ENCODE measurements at regions of chr12 and their contacts with region 1.

Region 1: DNA sequence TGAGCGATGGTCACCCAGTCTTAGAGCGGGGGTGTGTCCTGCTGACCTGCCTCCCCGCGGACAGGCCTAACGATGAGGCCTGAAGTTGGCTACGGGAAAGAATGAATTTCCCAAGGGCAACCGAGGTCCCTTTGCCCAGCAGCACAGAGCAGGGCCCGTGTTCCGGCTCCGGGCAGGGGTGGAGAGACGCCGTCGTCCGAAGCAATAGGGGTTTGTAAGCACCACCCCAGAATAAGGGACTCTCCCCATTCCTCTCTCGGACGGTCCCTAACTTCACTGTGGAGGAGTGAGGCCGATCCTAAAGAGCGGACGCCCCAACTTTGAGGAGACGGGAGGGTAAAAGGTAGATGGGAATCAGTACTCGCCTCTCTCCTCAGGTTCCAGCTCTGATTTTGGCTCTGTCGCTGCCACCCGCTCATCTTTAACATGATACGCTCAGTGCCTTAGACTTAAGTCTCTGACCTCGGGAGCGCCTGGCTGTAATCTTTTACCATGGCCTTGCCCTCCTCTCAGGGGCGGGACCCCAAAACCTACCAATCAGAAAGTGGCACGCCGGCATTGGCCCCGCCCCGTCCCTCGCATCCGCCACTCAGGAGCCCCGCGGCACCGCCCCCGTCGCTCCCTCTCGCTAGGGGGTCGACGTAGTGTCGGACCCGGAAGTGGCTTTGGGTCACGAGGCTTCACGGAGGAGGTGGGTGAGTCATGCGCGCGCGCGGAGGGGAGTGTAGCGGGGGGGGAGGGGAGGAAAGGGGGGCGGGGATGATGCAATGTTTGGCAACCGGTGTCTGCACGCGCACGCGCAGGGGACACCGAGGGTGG is at the start of gene DDIT3:
- DNase-seq: peak; percentile 98 to 100 (median 100)
- ATAC-seq: peak; percentile 70 to 79
- H3K4me3 Mint-ChIP-seq: peak within 1 kb of the TSS; percentile 95 to 99 (median 98)
- H3K27ac Mint-ChIP-seq: peak within 1 kb of the TSS; percentile 99 to 100 (median 100)
- H3K4me1 Mint-ChIP-seq: peaks cover 40 to 67% (median 63%) of the 10 kb centered on the region in 4 donors
- H3K27me3 Mint-ChIP-seq: peaks cover 0 to 2% (median 0%) of the 10 kb centered on the region in 5 donors
- polyA plus RNA-seq, gene DDIT3: 13.1 to 18.7 (median 15.5) TPM

Region 2: GRCh38 chr12:57332646-57333312 is 187.5 kb before region 1 on chr12:
- POLR2A ChIA-PET with region 1: interaction called, 11 read pairs
- DNase-seq: no peak
- ATAC-seq: no peak
- H3K4me3 Mint-ChIP-seq: no peak overlapping the region
- H3K27ac Mint-ChIP-seq: peak overlapping the region in 2 of 10 donors; percentile 5 to 31
- H3K4me1 Mint-ChIP-seq: peaks cover 0 to 8% (median 4%) of the 10 kb centered on the region in 4 donors
- H3K27me3 Mint-ChIP-seq: no peaks in the 10 kb centered on the region

Region 3: DNA sequence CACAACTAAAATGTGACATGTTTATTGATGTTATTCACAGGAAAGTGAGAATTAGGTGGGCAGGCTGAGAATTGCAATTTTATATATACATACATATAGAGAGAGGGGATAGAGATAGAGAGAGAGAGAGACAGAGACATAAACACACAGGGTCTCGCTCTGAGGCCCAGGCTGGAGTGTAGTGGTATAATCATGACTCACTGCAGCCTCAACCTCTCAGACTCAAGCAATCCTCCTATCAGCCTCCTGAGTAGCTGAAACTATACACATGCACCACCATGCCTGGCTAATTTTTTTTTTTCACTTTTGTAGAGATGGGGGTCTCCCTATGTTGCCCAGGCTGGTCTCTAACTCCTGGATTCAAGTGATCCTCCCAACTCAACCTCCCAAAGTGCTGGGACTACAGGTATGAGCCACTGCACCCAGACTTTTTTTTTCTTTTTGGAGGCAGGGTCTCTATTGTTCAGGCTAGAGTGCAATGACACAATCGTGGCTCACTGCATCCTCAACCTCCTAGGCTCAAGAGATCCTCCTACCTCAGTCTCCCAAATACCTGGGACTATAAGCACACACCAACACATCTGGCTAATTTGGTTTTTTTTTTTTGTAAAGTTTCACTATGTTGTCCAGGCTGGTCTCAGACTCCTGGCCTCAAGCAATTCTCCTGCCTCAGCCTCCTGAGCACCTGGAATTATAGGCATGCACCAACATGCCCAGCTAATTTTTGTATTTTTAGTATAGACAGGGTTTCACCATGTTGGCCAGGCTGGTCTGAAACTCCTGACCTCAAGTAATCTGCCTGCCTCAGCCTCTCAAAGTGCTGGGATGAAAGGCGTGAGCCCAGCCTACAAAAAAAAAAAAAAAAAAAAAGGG is 138.3 kb before region 1 on chr12:
- POLR2A ChIA-PET with region 1: no interaction called
- DNase-seq: no peak
- ATAC-seq: no peak
- H3K4me3 Mint-ChIP-seq: no peak overlapping the region
- H3K27ac Mint-ChIP-seq: peak overlapping the region in 5 of 10 donors; percentile 7 to 41 (median 36)
- H3K4me1 Mint-ChIP-seq: peaks cover 7 to 23% (median 14%) of the 10 kb centered on the region in 4 donors
- H3K27me3 Mint-ChIP-seq: no peaks in the 10 kb centered on the region

Region 4: GRCh38 chr12:57462251-57462911 is 57.9 kb before region 1 on chr12:
- POLR2A ChIA-PET with region 1: interaction called, 21 read pairs
- DNase-seq: peak; percentile 78 to 93 (median 88)
- ATAC-seq: peak; percentile 63 to 66
- H3K4me3 Mint-ChIP-seq: peak overlapping the region; percentile 80 to 96 (median 90)
- H3K27ac Mint-ChIP-seq: peak overlapping the region; percentile 52 to 93 (median 87)
- H3K4me1 Mint-ChIP-seq: peaks cover 31 to 58% (median 43%) of the 10 kb centered on the region in 4 donors
- H3K27me3 Mint-ChIP-seq: peaks cover 0 to 3% (median 0%) of the 10 kb centered on the region in 5 donors

Region 5: GRCh38 chr12:57476162-57476992 is 43.9 kb before region 1 on chr12:
- POLR2A ChIA-PET with region 1: interaction called, 135 read pairs
- DNase-seq: peak; percentile 59 to 90 (median 76)
- ATAC-seq: peak; percentile 13 to 41
- H3K4me3 Mint-ChIP-seq: peak overlapping the region; percentile 94 to 100 (median 98)
- H3K27ac Mint-ChIP-seq: peak overlapping the region; percentile 97 to 100 (median 100)
- H3K4me1 Mint-ChIP-seq: peaks cover 48 to 95% (median 88%) of the 10 kb centered on the region in 4 donors
- H3K27me3 Mint-ChIP-seq: no peaks in the 10 kb centered on the region

Region 6: DNA sequence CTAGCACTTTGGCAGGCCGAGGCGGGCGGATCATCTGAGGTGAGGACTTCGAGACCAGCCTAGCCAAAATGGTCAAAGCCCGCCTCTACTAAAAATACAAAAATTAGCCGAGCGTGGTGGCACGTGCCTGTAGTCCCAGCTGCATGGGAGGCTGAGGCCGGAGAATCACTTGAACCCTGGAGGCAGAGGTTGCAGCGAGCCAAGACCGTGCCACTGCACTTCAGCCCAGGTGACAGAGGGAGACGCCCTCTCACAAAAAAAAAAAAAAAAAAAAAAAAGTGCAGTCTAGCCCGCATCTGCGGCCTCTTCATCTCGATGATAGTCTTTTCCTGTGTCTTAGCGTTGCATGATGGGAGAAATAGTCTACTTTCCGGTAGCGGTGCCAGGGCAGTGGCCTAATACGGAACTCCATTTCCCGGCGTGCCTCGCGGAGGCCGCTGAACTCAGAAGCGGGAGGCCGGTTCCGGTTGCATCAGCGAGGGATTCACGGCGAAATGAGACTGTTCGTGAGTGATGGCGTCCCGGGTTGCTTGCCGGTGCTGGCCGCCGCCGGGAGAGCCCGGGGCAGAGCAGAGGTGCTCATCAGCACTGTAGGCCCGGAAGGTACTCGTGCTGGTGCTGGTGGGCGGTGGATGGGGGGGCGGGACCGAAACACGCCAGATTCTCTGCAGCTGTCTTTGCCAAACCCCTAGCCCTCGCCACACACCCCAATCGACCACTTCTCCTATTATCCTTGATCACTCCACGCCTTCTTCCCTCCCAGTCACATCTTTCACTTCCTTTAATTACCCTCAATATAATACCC is 32.5 kb before region 1 on chr12 and contains the start of gene MARS1:
- POLR2A ChIA-PET with region 1: interaction called, 135 read pairs
- DNase-seq: peak; percentile 76 to 95 (median 90)
- ATAC-seq: peak; percentile 97 to 98
- H3K4me3 Mint-ChIP-seq: peak within 1 kb of the TSS; percentile 92 to 99 (median 96)
- H3K27ac Mint-ChIP-seq: peak within 1 kb of the TSS; percentile 88 to 98 (median 97)
- H3K4me1 Mint-ChIP-seq: peaks cover 13 to 43% (median 39%) of the 10 kb centered on the region in 4 donors
- H3K27me3 Mint-ChIP-seq: no peaks in the 10 kb centered on the region
- polyA plus RNA-seq, gene MARS1: 81.0 to 93.5 (median 91.9) TPM

Region 7: GRCh38 chr12:57533108-57533507 is 12.8 kb after region 1 on chr12:
- POLR2A ChIA-PET with region 1: interaction called, 10 read pairs
- DNase-seq: no peak
- ATAC-seq: no peak
- H3K4me3 Mint-ChIP-seq: no peak overlapping the region
- H3K27ac Mint-ChIP-seq: peak overlapping the region in 3 of 10 donors; percentile 7 to 43 (median 19)
- H3K4me1 Mint-ChIP-seq: peaks cover 0 to 9% (median 6%) of the 10 kb centered on the region in 4 donors
- H3K27me3 Mint-ChIP-seq: no peaks in the 10 kb centered on the region

Region 8: DNA sequence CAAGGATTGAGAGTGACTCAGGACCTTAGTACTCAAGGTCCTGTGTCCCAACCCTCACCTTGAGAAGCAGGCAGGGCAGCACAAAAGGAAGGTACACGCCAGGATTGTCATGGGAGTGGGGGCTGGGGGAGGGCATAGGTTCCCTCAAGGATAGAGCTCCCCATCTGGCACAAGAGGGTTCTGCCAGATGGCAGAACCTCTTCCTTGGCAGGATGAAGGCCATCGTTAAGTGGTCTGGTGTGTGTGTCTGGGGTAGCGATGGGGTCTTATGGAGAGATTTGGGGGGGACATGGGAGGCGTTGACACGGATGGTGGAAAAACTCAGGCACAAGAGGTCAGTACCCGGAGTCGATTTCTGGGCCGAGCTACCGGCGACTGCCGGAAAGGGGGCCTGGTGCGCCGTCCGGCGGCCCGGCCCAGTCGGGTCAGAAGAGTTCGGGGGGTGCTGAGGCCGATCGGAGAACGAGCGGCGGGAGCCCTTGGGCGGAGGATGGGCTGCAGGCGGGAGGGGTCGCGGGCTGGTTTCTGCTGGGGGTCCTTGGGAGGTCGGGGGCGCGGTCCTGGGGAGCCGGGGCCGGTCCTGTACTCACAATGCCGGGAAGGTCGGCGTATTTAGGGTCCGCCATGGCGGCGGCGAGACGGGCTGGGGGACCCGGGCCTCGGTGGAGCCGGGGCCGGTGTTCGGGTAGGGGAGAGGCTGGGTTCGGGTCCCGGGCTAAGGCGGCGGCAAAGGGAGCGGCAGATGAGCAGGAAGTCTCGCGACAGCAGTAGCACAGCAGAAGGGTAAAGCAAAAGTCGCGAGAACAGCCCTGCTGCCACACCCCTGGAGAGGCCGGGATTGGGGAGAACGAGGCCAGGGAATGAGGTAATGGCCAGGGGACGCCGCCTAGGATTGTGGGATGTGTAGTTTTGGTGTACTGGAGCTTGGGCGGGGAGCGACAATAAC is 26.4 kb after region 1 on chr12 and contains the start of gene DCTN2:
- POLR2A ChIA-PET with region 1: interaction called, 12 read pairs
- DNase-seq: peak; percentile 76 to 96 (median 90)
- ATAC-seq: peak; percentile 90 to 93
- H3K4me3 Mint-ChIP-seq: peak within 1 kb of the TSS; percentile 91 to 99 (median 97)
- H3K27ac Mint-ChIP-seq: peak within 1 kb of the TSS; percentile 86 to 98 (median 94)
- H3K4me1 Mint-ChIP-seq: peaks cover 29 to 61% (median 57%) of the 10 kb centered on the region in 4 donors
- H3K27me3 Mint-ChIP-seq: peaks cover 0 to 14% (median 0%) of the 10 kb centered on the region in 5 donors
- polyA plus RNA-seq, gene DCTN2: 60.6 to 67.8 (median 67.7) TPM